ENCODE measurements at regions of chr4 and their contacts with region 1.

Region 1: DNA sequence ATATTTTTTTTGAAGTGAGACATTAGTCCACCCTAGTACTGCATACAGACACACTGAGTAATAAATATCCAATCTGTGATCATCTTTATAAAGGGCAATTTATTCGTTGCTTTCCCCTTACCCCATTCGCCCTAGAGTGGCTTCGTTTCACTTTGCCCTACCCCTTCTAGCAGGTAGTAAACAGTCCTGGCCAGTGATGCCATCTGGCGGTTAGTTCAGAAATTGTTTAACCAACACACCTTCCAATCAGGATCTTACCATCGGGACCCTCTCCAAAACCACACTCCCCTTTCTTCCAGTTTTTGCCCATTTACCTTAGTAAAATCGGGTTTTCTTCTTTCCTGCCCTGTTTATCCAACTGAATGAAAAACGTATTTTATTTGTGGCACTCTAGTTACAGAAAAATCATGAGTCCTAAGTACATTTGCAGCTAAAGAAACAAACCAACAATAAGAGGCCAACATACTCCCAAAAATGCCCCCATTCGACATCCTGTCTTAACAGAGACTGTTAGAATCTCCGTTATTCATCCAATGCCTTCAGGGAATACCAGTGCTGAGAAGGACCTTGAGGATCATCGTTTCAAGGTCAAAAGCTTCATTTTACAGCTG is 2.2 kb downstream of the PPA2 start:
- DNase-seq: peak; percentile 66
- ATAC-seq: peak; percentile 61
- H3K4me3 ChIP-seq: peak overlapping the region; percentile 93
- H3K27ac ChIP-seq: peak overlapping the region; percentile 92
- H3K4me1 ChIP-seq: no peaks in the 10 kb centered on the region
- H3K27me3 ChIP-seq: no peaks in the 10 kb centered on the region
- CTCF ChIP-seq: peak; percentile 71 to 83 (median 74)
- EP300 ChIP-seq: no peak
- POLR2A ChIP-seq: no peak
- RAD21 ChIP-seq: peak; percentile 95

Region 2: GRCh38 chr4:104015680-104016253 is 1455.9 kb before region 1 on chr4:
- CTCF ChIA-PET with region 1: no interaction called
- POLR2A ChIA-PET with region 1: no interaction called
- RAD21 ChIA-PET with region 1: no interaction called
- SMC1A ChIA-PET with region 1: no interaction called
- in situ Hi-C with region 1: no loop called
- intact Hi-C with region 1: loop called (anchors 10 kb)
- DNase-seq: no peak
- ATAC-seq: peak; percentile 78
- H3K4me3 ChIP-seq: no peak overlapping the region
- H3K27ac ChIP-seq: no peak overlapping the region
- H3K4me1 ChIP-seq: no peaks in the 10 kb centered on the region
- H3K27me3 ChIP-seq: no peaks in the 10 kb centered on the region
- CTCF ChIP-seq: peak; percentile 32 to 51 (median 45); a peak in 5 of 6 replicates
- EP300 ChIP-seq: no peak
- POLR2A ChIP-seq: no peak
- RAD21 ChIP-seq: peak; percentile 70

Region 3: DNA sequence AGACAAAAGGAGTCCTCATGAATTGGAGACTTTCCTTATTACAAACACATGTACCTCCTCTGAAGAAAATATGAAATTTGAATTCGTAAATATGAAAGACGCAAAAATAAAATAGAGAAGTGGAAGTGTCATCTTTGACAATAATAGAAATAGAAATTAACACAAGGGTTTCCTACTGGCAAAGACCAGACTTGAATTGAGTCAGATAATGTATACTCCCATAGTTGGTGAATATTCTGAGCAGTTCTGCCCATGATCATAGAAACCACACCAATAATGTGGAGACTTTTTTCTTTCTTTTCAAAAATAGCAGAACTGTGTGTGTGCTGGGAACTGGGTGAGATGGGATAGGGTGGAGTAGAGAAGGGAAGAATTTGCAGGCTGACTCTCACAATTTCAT is 602.7 kb before region 1 on chr4:
- CTCF ChIA-PET with region 1: interaction called, 4 read pairs
- POLR2A ChIA-PET with region 1: no interaction called
- RAD21 ChIA-PET with region 1: no interaction called
- SMC1A ChIA-PET with region 1: interaction called, 3 read pairs
- in situ Hi-C with region 1: no loop called
- intact Hi-C with region 1: loop called (anchors 2 kb)
- DNase-seq: peak; percentile 79
- ATAC-seq: peak; percentile 93
- H3K4me3 ChIP-seq: peak overlapping the region; percentile 24; the same call in 1 of the 2 replicates
- H3K27ac ChIP-seq: peak overlapping the region; percentile 67
- H3K4me1 ChIP-seq: peaks cover 36% of the 10 kb centered on the region
- H3K27me3 ChIP-seq: no peaks in the 10 kb centered on the region
- CTCF ChIP-seq: no peak
- EP300 ChIP-seq: peak; percentile 92 to 96
- POLR2A ChIP-seq: no peak
- RAD21 ChIP-seq: peak; percentile 24; the same call in 1 of the 2 replicates

Region 4: DNA sequence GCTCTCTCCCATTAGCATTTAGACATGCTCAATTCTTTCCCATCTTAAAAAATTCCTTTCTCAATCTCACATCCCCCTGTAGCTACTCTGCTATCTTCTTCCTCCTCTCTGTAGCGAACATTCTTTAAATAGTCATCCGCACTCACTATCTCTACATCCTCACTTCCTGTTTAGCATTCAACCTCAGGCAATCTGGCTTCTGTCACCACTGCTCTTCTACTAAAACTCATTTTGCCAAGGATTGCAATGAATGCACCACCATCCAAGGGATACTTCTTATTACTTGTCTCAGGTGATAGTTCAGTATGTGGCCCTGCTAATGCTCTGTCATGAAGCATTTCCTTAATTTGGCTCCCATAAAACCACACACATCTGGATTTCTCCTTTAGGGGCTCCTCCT is 335.9 kb before region 1 on chr4:
- CTCF ChIA-PET with region 1: interaction called, 51 read pairs
- POLR2A ChIA-PET with region 1: interaction called, 7 read pairs
- RAD21 ChIA-PET with region 1: interaction called, 22 read pairs
- SMC1A ChIA-PET with region 1: interaction called, 41 read pairs
- in situ Hi-C with region 1: loop called (anchors 5 kb)
- intact Hi-C with region 1: no loop called
- DNase-seq: no peak
- ATAC-seq: no peak; the same call in 2 of the 3 replicates
- H3K4me3 ChIP-seq: no peak overlapping the region
- H3K27ac ChIP-seq: no peak overlapping the region
- H3K4me1 ChIP-seq: no peaks in the 10 kb centered on the region; the same call in none of the 2 replicates
- H3K27me3 ChIP-seq: no peaks in the 10 kb centered on the region
- CTCF ChIP-seq: no peak
- EP300 ChIP-seq: no peak
- POLR2A ChIP-seq: no peak
- RAD21 ChIP-seq: no peak

Region 5: DNA sequence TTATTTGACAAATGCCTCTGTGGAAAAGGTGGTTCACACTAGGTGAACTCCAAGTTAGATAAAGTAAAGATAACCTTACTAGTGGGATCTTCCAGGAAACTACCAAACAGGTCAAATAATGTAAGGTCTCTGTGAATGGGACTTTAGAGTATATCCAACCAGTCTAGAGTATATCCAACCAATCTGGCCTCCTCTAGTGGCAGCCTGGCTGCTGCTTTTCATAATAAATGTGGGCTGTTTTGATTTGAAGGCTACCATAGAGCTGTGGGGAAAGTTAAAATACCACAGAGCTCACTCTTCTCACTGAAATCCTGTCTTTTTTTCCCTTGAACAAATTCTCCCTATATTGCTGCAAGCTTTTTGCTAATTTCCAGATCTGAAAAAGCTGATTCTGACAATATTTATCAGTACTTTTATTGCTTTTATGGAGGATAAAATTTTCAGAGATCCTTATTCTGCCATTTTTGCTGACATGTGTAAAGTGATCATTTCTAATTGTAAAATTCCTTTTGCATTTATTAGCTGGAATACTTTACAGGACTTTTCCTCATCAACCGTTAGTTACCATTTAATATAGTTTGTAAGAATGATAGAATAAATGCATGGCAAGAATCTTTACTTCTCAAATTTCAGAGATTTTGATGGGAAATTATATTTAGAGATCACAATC is 213.7 kb before region 1 on chr4:
- CTCF ChIA-PET with region 1: interaction called, 10 read pairs
- POLR2A ChIA-PET with region 1: no interaction called
- RAD21 ChIA-PET with region 1: no interaction called
- SMC1A ChIA-PET with region 1: interaction called, 3 read pairs
- in situ Hi-C with region 1: no loop called
- intact Hi-C with region 1: no loop called
- DNase-seq: no peak
- ATAC-seq: peak; percentile 33; the same call in 2 of the 3 replicates
- H3K4me3 ChIP-seq: no peak overlapping the region
- H3K27ac ChIP-seq: no peak overlapping the region
- H3K4me1 ChIP-seq: no peaks in the 10 kb centered on the region
- H3K27me3 ChIP-seq: no peaks in the 10 kb centered on the region
- CTCF ChIP-seq: peak in 2 of 3 experiments; percentile 6 to 8; a peak in 1 of 6 replicates
- EP300 ChIP-seq: no peak
- POLR2A ChIP-seq: no peak
- RAD21 ChIP-seq: no peak

Region 6: GRCh38 chr4:105509291-105509690 is 37.6 kb after region 1 on chr4:
- CTCF ChIA-PET with region 1: interaction called, 19 read pairs
- POLR2A ChIA-PET with region 1: no interaction called
- RAD21 ChIA-PET with region 1: no interaction called
- SMC1A ChIA-PET with region 1: no interaction called
- in situ Hi-C with region 1: no loop called
- intact Hi-C with region 1: no loop called
- DNase-seq: peak; percentile 20
- ATAC-seq: peak; percentile 96
- H3K4me3 ChIP-seq: no peak overlapping the region
- H3K27ac ChIP-seq: no peak overlapping the region
- H3K4me1 ChIP-seq: peaks cover 8% of the 10 kb centered on the region; the same call in 1 of the 2 replicates
- H3K27me3 ChIP-seq: no peaks in the 10 kb centered on the region
- CTCF ChIP-seq: no peak
- EP300 ChIP-seq: peak; percentile 18 to 78; a peak in 2 of 4 replicates
- POLR2A ChIP-seq: no peak
- RAD21 ChIP-seq: no peak

Region 7: DNA sequence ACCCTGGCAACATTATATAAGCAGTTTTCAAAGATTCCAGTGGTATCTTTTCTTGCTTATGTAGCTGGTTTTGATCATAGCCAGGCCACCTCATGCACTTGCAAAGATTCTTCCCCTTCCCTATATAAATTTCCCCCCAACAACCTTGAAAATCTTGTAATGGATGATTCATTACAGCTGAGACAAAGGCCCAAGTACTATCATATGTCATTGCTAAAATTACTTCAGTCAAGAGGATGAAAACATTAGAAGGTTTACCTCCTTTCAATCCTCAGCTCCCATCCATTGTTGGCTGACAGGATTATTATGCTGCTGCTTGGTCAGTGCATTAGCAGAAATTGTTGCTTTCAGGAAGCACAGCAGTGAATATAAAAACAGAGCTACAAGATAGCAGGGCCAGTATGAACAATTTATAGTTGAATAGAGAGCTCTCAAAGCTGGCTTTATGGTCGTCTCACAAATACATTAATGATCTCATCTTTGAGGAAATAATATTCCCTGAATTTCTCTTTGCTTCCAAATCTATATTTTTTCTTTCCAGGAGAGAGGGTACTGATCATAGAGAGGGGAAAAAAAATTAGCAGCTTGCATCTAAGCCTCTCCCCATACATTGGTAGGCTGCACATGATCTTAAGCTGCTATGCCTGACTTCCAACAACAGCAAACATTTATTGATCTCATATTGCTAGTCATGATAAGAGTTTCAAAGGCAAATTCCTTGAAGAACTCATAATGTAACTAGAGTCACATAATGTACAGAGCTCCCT is 73.0 kb after region 1 on chr4:
- CTCF ChIA-PET with region 1: no interaction called
- POLR2A ChIA-PET with region 1: no interaction called
- RAD21 ChIA-PET with region 1: no interaction called
- SMC1A ChIA-PET with region 1: no interaction called
- in situ Hi-C with region 1: no loop called
- intact Hi-C with region 1: no loop called
- DNase-seq: no peak
- ATAC-seq: no peak
- H3K4me3 ChIP-seq: no peak overlapping the region
- H3K27ac ChIP-seq: no peak overlapping the region
- H3K4me1 ChIP-seq: no peaks in the 10 kb centered on the region
- H3K27me3 ChIP-seq: no peaks in the 10 kb centered on the region
- CTCF ChIP-seq: no peak
- EP300 ChIP-seq: no peak
- POLR2A ChIP-seq: no peak
- RAD21 ChIP-seq: no peak